CD4-positive, alpha-beta T cell (primary cell): ENCODE measurements at regions of chr5 and their contacts with region 1.

Region 1: DNA sequence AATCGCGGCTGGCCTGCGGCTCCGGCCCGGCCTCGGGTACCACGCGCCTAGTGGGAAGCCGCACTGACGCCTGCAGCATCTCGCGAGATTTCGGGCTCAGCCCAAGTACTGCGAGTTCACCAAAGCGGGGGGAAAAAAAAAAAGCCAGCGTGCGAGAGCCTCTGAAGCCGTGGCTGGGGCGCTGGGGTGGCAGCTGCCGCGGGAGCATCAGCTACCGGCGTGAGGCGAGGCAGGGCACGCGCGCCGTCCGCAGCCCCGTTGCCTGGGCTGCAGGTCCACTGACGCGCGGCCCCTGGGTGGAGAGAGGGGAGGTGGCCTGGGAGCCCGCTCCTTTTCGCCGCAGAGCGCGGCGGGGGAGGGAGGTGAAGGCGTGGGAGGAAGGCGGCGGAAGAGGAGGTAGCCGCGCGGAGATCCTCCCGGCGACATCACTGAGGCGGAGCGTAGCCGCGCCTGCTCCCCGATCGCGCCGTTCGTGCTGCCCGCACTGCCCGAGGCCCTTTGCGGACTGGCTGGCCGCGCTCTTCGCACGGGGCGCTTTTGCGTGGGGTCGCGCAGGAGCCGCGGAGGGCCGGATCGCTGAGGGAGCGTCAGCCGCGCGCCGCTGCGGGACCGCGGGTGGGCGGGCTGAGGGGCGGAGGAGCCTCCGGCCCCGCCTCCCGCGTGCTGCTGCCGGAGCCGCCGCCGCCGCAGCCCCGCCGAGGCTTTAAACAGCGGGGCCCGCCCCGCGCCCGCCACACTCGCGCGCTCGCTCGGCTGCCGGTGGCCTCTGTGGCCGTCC is at the start of gene SLC12A2:
- DNase-seq: peak; percentile 80 to 99 (median 88)
- ATAC-seq: peak; percentile 72
- H3K4me3 ChIP-seq: peak within 1 kb of the TSS; percentile 81
- H3K4me3 Mint-ChIP-seq: peak within 1 kb of the TSS; percentile 97
- H3K27ac ChIP-seq: peak within 1 kb of the TSS; percentile 89 to 90
- H3K27ac Mint-ChIP-seq: peak within 1 kb of the TSS; percentile 92
- H3K4me1 ChIP-seq: peaks cover 27% of the 10 kb centered on the region
- H3K4me1 Mint-ChIP-seq: peaks cover 79% of the 10 kb centered on the region
- H3K27me3 ChIP-seq: no peaks in the 10 kb centered on the region
- H3K27me3 Mint-ChIP-seq: no peaks in the 10 kb centered on the region
- CTCF ChIP-seq: no peak
- total RNA-seq, gene SLC12A2: 13.7 to 16.4 TPM

Region 2: DNA sequence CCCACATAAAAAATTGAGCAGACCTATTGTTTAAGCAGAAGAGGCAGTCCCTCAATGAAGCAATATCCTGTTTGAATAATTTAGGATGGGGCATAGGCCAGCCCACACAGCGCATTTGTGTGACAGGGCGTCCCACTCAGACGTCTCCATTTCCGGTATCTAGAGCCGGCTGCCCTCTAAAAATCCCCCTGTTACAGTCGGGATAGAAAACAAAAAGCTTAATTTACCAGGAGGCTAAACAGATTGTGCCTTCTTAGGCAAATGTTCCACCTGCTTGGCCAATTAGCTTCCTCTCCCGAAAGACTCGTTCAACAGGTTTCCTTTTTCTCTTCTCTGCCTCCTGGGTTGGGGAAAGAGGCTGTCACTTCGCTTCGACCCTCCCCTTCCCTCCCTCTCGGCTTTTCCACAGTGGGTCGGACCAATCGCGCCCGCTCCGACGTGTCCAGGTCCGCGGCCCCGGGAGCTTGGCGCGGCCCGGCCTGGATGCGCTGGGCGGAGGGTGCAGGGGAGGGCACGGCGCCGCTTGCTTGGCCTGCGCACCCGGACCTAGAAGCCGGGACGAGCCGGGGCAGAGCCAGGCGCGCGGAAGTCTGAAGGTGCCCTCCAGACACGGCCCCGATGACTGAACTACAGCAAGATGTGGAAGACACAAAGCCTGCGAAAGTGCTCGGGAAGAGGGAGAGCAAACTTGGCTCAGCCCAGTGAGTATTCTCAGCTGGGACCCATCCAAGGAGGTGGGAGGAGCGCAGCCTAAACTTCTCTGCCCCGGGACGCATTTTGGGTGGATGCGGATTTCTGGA is 1660.0 kb before region 1 on chr5 and contains the start of gene GRAMD2B:
- CTCF ChIA-PET with region 1: no interaction called
- POLR2A ChIA-PET with region 1: no interaction called
- intact Hi-C with region 1: loop called in 1 of 2 experiments (anchors 10 kb)
- DNase-seq: peak; percentile 38 to 88 (median 57)
- ATAC-seq: peak; percentile 95
- H3K4me3 ChIP-seq: peak within 1 kb of the TSS; percentile 72
- H3K4me3 Mint-ChIP-seq: peak within 1 kb of the TSS; percentile 99
- H3K27ac ChIP-seq: peak within 1 kb of the TSS; percentile 81 to 82
- H3K27ac Mint-ChIP-seq: peak within 1 kb of the TSS; percentile 93
- H3K4me1 ChIP-seq: peaks cover 10% of the 10 kb centered on the region
- H3K4me1 Mint-ChIP-seq: peaks cover 48% of the 10 kb centered on the region
- H3K27me3 ChIP-seq: no peaks in the 10 kb centered on the region
- H3K27me3 Mint-ChIP-seq: no peaks in the 10 kb centered on the region
- CTCF ChIP-seq: no peak
- total RNA-seq, gene GRAMD2B: 7.2 to 9.4 TPM

Region 3: DNA sequence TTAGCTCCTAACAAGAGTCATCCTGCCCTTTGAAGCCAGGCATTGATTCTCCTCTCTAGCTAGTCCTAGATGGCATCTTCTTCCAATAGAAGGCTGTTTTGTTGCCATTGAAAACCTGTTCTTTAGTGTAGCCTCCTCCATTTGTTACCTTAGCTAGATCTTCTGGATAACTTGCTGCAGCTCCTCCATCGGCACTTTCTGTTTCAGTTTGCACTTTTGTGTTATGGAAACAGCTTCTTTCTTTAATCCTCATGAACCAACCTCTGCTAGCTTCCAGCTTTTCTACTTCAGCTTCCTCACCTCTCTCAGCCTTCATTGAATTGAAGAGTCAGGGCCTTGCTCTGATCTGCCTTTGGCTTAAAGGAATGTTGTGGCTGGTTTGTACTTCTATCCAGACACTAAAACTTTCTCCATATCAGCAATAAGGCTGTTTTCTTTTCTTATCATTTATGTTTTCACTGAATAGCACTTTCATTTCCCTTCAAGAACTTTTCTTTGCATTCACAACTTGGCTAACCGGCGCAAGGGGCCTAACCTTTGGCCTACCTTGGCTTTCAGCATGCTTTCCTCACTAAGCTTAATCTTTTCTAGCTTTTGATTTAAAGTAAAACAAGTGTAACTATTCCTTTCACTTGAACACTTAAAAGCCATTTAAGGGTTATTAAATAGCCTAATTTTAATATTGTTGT is 166.2 kb before region 1 on chr5:
- CTCF ChIA-PET with region 1: no interaction called
- POLR2A ChIA-PET with region 1: no interaction called
- intact Hi-C with region 1: loop called in 1 of 2 experiments (anchors 10 kb)
- DNase-seq: peak in 1 of 14 experiments; percentile 20
- ATAC-seq: no peak
- H3K4me3 ChIP-seq: no peak overlapping the region
- H3K4me3 Mint-ChIP-seq: no peak overlapping the region
- H3K27ac ChIP-seq: no peak overlapping the region
- H3K27ac Mint-ChIP-seq: no peak overlapping the region
- H3K4me1 ChIP-seq: no peaks in the 10 kb centered on the region
- H3K4me1 Mint-ChIP-seq: peaks cover 10% of the 10 kb centered on the region
- H3K27me3 ChIP-seq: no peaks in the 10 kb centered on the region
- H3K27me3 Mint-ChIP-seq: no peaks in the 10 kb centered on the region
- CTCF ChIP-seq: no peak

Region 4: DNA sequence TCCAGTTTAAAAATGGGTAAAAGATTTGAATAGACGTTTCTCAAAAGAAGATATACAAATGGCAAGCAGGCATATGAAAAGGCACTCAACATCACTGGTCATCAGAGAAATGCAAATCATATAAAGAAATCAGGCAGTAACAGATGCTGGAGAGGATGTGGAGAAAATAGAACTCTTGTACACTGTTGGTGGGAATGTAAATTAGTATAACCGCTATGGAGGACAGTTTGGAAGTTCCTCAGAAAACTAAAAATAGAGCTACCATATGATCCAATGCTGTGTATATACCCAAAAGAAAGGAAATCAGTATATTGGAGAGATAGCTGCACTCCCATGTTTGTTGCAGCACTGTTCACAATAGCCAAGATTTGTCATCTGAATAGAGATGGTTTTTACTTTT is 43.0 kb after region 1 on chr5:
- CTCF ChIA-PET with region 1: no interaction called
- POLR2A ChIA-PET with region 1: interaction called, 3 read pairs
- intact Hi-C with region 1: loop called in 1 of 2 experiments (anchors 5 kb)
- DNase-seq: no peak
- ATAC-seq: no peak
- H3K4me3 ChIP-seq: no peak overlapping the region
- H3K4me3 Mint-ChIP-seq: no peak overlapping the region
- H3K27ac ChIP-seq: no peak overlapping the region
- H3K27ac Mint-ChIP-seq: no peak overlapping the region
- H3K4me1 ChIP-seq: no peaks in the 10 kb centered on the region
- H3K4me1 Mint-ChIP-seq: no peaks in the 10 kb centered on the region
- H3K27me3 ChIP-seq: no peaks in the 10 kb centered on the region
- H3K27me3 Mint-ChIP-seq: no peaks in the 10 kb centered on the region
- CTCF ChIP-seq: no peak

Region 5: GRCh38 chr5:128304088-128304487 is 220.9 kb after region 1 on chr5:
- CTCF ChIA-PET with region 1: no interaction called
- POLR2A ChIA-PET with region 1: no interaction called
- intact Hi-C with region 1: no loop called
- DNase-seq: no peak
- ATAC-seq: no peak
- H3K4me3 ChIP-seq: no peak overlapping the region
- H3K4me3 Mint-ChIP-seq: no peak overlapping the region
- H3K27ac ChIP-seq: no peak overlapping the region
- H3K27ac Mint-ChIP-seq: no peak overlapping the region
- H3K4me1 ChIP-seq: no peaks in the 10 kb centered on the region
- H3K4me1 Mint-ChIP-seq: no peaks in the 10 kb centered on the region
- H3K27me3 ChIP-seq: no peaks in the 10 kb centered on the region
- H3K27me3 Mint-ChIP-seq: no peaks in the 10 kb centered on the region
- CTCF ChIP-seq: no peak

Region 6: DNA sequence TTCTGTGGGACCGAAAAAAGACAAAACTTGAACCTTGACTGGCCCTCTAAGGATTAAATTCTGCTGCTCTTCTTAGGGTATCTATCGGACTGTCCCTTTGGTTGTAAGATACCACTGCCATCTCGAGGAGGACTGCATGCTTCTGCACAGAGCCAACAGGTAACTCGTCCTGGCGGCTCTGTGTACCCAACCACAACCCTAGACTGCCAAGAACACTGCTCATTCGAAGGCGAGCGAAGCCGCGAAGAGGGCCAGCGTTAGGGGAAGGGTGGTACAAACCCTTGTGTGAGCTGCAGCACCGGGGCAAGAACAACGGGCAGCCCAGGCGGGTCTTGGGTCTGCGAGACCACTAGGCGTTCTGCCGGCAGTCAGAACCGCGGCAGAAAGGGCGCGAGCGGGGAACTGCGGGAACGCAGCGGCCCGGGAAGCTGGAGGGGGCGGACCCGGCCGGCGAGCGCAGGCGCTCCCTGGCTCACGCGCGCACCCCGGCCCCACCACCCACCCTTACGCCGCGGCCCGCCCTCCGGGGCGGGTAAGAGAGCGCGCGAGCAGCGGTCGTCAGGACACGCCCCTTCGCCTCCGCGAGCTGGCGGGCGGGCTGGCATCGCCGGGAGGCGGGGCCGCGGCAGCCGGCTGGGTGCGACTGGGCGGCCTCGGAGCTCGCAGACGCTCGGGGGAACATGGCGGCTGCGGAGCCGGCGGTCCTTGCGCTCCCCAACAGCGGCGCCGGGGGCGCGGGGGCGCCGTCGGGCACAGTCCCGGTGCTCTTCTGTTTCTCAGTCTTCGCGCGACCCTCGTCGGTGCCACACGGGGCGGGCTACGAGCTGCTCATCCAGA is 1011.1 kb after region 1 on chr5 and contains the start of gene ISOC1:
- CTCF ChIA-PET with region 1: interaction called, 4 read pairs
- POLR2A ChIA-PET with region 1: interaction called, 9 read pairs
- intact Hi-C with region 1: loop called (anchors 5 to 10 kb)
- DNase-seq: peak; percentile 80 to 97 (median 90)
- ATAC-seq: peak; percentile 90
- H3K4me3 ChIP-seq: peak within 1 kb of the TSS; percentile 75
- H3K4me3 Mint-ChIP-seq: peak within 1 kb of the TSS; percentile 93
- H3K27ac ChIP-seq: peak within 1 kb of the TSS; percentile 42 to 66
- H3K27ac Mint-ChIP-seq: peak within 1 kb of the TSS; percentile 88
- H3K4me1 ChIP-seq: peaks cover 15% of the 10 kb centered on the region
- H3K4me1 Mint-ChIP-seq: peaks cover 46% of the 10 kb centered on the region
- H3K27me3 ChIP-seq: no peaks in the 10 kb centered on the region
- H3K27me3 Mint-ChIP-seq: peaks cover 6% of the 10 kb centered on the region
- CTCF ChIP-seq: no peak
- total RNA-seq, gene ISOC1: 6.6 to 7.1 TPM